ENCODE measurements at regions of chr12 and their contacts with region 1.

Region 1: GRCh38 chr12:56448860-56449621 is at the start of gene TIMELESS:
- DNase-seq: peak; percentile 72 to 95 (median 80)
- ATAC-seq: peak; percentile 97 to 98
- H3K4me3 Mint-ChIP-seq: peak within 1 kb of the TSS; percentile 88 to 95 (median 92)
- H3K27ac Mint-ChIP-seq: peak within 1 kb of the TSS; percentile 93 to 97 (median 95)
- H3K4me1 Mint-ChIP-seq: peaks cover 12 to 28% (median 14%) of the 10 kb centered on the region in 4 donors
- H3K27me3 Mint-ChIP-seq: no peaks in the 10 kb centered on the region
- polyA plus RNA-seq, gene TIMELESS: 3.3 to 4.2 (median 3.5) TPM

Region 2: GRCh38 chr12:56333679-56334489 is 115.2 kb before region 1 on chr12 and contains the start of gene PAN2:
- POLR2A ChIA-PET with region 1: interaction called, 12 read pairs
- DNase-seq: peak; percentile 78 to 96 (median 93)
- ATAC-seq: peak; percentile 81 to 87
- H3K4me3 Mint-ChIP-seq: peak within 1 kb of the TSS; percentile 87 to 99 (median 94)
- H3K27ac Mint-ChIP-seq: peak within 1 kb of the TSS; percentile 99 to 100 (median 99)
- H3K4me1 Mint-ChIP-seq: peaks cover 20 to 53% (median 47%) of the 10 kb centered on the region in 4 donors
- H3K27me3 Mint-ChIP-seq: peaks cover 0 to 1% (median 0%) of the 10 kb centered on the region in 5 donors
- polyA plus RNA-seq, gene PAN2: 10.5 to 11.9 (median 11.0) TPM

Region 3: GRCh38 chr12:56359851-56360767 is 88.9 kb before region 1 on chr12 and contains the start of gene STAT2:
- POLR2A ChIA-PET with region 1: interaction called, 12 read pairs
- DNase-seq: peak; percentile 95 to 100 (median 99)
- ATAC-seq: peak; percentile 95 to 96
- H3K4me3 Mint-ChIP-seq: peak within 1 kb of the TSS; percentile 93 to 99 (median 96)
- H3K27ac Mint-ChIP-seq: peak within 1 kb of the TSS; percentile 93 to 99 (median 96)
- H3K4me1 Mint-ChIP-seq: peaks cover 8 to 38% (median 36%) of the 10 kb centered on the region in 4 donors
- H3K27me3 Mint-ChIP-seq: peaks cover 0 to 1% (median 0%) of the 10 kb centered on the region in 5 donors
- polyA plus RNA-seq, gene STAT2: 61.7 to 68.1 (median 64.5) TPM

Region 4: GRCh38 chr12:56413392-56413791 is 35.6 kb before region 1 on chr12:
- POLR2A ChIA-PET with region 1: no interaction called
- DNase-seq: no peak
- ATAC-seq: no peak
- H3K4me3 Mint-ChIP-seq: no peak overlapping the region
- H3K27ac Mint-ChIP-seq: no peak overlapping the region
- H3K4me1 Mint-ChIP-seq: no peaks in the 10 kb centered on the region
- H3K27me3 Mint-ChIP-seq: no peaks in the 10 kb centered on the region

Region 5: GRCh38 chr12:56461235-56462159 is 12.5 kb after region 1 on chr12:
- POLR2A ChIA-PET with region 1: interaction called, 15 read pairs
- DNase-seq: no peak
- ATAC-seq: no peak
- H3K4me3 Mint-ChIP-seq: no peak overlapping the region
- H3K27ac Mint-ChIP-seq: no peak overlapping the region
- H3K4me1 Mint-ChIP-seq: peaks cover 3 to 9% (median 6%) of the 10 kb centered on the region in 4 donors
- H3K27me3 Mint-ChIP-seq: no peaks in the 10 kb centered on the region

Region 6: GRCh38 chr12:56468216-56469006 is 19.4 kb after region 1 on chr12 and contains the start of gene SPRYD4:
- POLR2A ChIA-PET with region 1: interaction called, 15 read pairs
- DNase-seq: peak; percentile 91 to 96 (median 93)
- ATAC-seq: peak; percentile 94 to 96
- H3K4me3 Mint-ChIP-seq: peak within 1 kb of the TSS; percentile 90 to 98 (median 96)
- H3K27ac Mint-ChIP-seq: peak within 1 kb of the TSS; percentile 96 to 99 (median 98)
- H3K4me1 Mint-ChIP-seq: peaks cover 19 to 42% (median 35%) of the 10 kb centered on the region in 4 donors
- H3K27me3 Mint-ChIP-seq: no peaks in the 10 kb centered on the region
- polyA plus RNA-seq, gene SPRYD4: 1.3 to 1.6 (median 1.4) TPM

Region 7: DNA sequence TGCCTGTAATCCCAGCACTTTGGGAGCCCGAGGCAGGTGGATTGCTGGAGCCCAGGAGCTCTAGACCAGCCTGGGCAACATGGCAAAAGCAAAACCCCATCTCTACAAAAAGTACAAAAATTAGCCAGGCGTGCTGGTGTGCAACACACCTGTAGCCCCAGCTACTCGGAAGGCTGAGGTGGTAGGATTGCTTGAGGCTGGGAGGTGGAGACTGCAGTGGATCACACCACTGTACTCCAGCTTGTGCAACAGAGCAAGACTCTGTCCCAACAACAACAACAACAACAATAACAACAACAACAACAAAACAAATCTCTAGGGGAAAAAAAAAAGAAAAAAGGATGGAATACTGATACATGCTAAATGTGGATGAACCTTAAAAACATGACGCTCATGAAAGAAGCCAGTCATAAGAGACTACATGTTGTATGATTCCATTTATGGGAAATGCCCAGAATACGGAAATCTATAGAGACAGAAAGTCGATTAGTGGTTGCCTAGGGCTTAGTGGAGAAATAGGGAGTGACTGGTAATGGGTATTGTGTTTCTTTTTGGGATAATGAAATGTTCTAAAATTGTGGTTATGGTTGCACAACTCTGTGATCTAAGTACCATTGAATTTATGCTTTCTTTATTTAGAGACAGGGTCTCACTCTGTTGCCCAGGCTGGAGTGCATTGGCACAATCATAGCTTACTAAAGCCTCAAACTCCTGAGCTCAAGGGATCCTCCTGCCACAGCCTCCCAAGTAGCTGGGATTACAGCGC is 80.4 kb after region 1 on chr12:
- POLR2A ChIA-PET with region 1: no interaction called
- DNase-seq: no peak
- ATAC-seq: no peak
- H3K4me3 Mint-ChIP-seq: no peak overlapping the region
- H3K27ac Mint-ChIP-seq: no peak overlapping the region
- H3K4me1 Mint-ChIP-seq: no peaks in the 10 kb centered on the region
- H3K27me3 Mint-ChIP-seq: no peaks in the 10 kb centered on the region

Region 8: GRCh38 chr12:57520053-57520871 is 1071.2 kb after region 1 on chr12 and contains the start of gene DDIT3:
- POLR2A ChIA-PET with region 1: no interaction called
- DNase-seq: peak; percentile 98 to 100 (median 100)
- ATAC-seq: peak; percentile 70 to 79
- H3K4me3 Mint-ChIP-seq: peak within 1 kb of the TSS; percentile 95 to 99 (median 98)
- H3K27ac Mint-ChIP-seq: peak within 1 kb of the TSS; percentile 99 to 100 (median 100)
- H3K4me1 Mint-ChIP-seq: peaks cover 40 to 67% (median 63%) of the 10 kb centered on the region in 4 donors
- H3K27me3 Mint-ChIP-seq: peaks cover 0 to 2% (median 0%) of the 10 kb centered on the region in 5 donors
- polyA plus RNA-seq, gene DDIT3: 13.1 to 18.7 (median 15.5) TPM

Measured in naive thymus-derived CD8-positive, alpha-beta T cell (primary cell).